Colonic mucosa (tissue), 4 donors: ENCODE measurements at regions of chr21 and their contacts with region 1.

Region 1: DNA sequence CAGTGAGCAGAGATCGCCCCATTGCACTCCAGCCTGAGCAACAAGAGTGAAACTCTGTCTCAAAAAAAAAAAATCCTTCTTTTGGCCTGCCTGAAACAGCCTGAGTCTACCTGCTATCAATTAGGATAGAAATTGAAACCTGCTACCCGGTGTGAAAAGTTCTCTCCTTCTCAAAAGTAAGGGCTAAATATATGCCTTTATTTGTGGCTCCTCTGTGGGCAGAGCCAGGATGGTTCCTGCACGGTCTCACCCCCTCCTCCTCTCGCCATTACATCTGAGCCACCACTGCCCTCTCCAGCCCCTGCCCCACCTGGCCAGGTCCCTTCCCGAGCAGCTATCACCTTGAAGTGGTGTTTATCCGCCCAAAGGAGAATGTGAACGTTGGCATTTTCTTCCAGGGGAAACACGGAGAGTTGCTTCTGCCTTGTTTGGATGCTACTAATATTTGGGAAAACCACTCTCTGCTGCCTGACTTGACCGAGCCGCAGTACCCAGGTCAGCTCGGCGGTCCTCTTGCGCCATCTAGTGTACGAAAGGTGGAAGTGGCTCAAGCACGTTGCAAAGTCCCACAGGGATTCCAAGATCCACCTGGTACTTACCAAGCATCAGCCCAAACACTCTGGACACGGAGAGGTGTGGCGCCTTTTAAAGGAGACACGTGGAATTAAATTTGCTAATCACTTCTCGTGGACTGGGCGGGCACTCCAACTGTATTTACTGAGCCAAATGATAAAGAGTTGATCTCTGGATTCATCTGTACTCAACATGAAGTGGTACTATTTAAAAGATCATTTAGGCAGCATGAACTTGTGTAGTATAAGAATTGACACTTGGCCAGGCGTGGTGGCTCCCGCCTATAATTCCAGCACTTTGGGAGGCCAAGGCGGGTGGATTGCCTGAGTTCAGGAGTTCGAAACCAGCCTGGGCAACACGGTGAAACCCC is 31.9 kb downstream of the SETD4 start:
- DNase-seq: peak; percentile 76
- H3K4me3 ChIP-seq: no peak overlapping the region
- H3K27ac ChIP-seq: no peak overlapping the region
- H3K4me1 ChIP-seq: no peaks in the 10 kb centered on the region
- H3K27me3 ChIP-seq: no peaks in the 10 kb centered on the region
- CTCF ChIP-seq: peak; percentile 87

Region 2: DNA sequence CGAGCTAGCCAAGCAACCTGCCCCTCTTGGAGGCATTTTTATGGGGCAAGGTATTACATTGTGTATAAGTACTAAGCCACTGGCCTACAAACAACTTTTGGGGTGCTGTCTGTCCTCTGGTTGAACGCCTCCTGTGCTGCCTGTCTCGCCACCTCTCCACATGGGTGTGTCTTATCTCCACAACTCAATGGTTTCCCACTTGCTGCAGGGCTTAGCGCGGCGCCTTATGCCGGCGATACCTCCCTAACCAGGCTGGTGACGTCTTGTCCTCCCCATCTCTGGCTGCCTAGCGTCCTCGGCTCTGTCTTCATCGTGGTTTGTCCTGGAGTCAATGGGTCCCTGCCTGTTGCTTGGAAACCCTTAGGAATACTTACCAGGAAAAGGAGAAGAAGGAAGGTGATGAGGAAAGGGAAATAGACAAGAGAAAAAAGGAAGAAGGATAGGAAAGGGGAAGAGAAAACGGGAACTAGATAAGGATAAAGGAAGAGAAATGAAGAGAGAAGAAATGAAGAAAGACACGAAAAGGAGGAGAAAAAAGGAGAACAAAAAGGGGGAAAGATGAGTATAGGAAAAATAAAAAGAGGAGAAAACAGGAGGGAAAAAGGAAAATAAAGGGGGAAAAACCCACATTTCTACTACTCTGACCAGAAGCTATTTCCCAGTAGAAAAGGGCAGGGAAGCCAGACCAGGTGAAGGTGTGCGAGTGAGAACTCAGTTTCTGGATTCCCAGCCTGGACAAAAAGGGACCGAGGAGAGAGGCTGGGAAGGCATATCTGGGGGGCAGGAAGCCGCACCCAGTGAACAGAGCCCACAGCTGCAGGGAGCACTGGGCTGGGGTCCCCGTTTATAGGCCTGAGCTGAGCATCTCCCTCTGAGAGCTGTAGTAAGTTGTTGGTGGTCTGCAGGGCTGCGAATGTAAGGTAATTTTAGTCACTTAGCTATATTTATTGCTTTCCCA is 1273.4 kb before region 1 on chr21:
- intact Hi-C with region 1: loop called (anchors 10 kb)
- DNase-seq: no peak
- H3K4me3 ChIP-seq: no peak overlapping the region
- H3K27ac ChIP-seq: no peak overlapping the region
- H3K4me1 ChIP-seq: no peaks in the 10 kb centered on the region
- H3K27me3 ChIP-seq: no peaks in the 10 kb centered on the region
- CTCF ChIP-seq: no peak